Dorsolateral prefrontal cortex (tissue), 120 donors: ENCODE measurements at regions of chr10 and their contacts with region 1.

Region 1: DNA sequence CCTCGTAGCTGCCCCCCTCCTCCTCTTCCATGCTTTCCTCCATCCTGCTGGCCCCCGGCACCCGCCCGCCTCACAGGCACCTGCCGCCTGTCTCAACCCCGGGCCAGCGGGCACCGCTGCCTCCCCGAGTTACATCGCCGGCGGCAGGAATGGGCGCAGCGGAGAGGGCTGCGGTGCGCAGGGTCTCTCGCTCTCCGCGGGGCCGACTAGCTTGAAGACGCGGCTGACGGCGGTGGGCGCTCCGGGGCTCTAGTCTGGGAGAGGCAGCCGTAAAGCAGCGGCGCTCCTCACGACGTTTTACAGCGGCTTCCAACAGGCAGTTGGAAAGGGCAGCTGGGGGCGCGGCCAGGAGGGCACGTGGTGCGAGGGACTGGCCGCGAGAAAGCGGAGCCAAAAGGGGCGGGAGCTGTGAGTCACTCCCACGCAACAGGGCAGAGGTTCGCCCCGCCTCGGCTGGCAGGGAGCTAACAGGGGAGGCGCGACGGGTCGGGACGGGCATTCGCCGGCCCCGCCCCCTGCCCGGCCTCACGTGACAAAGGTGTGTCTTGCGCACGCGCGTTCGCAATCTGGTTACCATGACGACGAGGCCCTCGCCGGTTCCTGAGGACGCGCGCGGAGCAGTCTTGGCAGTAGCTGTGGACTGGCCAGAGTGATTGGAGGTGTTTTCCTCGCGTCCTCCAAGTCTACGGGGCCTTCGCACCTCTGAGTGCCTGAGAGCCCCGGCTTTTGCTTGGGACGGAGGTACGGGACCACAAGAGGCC is at the start of gene CACUL1:
- DNase-seq: peak; percentile 99 to 100 (median 100)
- H3K4me3 ChIP-seq: peak within 1 kb of the TSS; percentile 68 to 100 (median 96)
- H3K27ac ChIP-seq: peak within 1 kb of the TSS in 57 of 59 donors; percentile 10 to 96 (median 84)
- H3K27me3 ChIP-seq: no peaks in the 10 kb centered on the region
- CTCF ChIP-seq: peak in 37 of 56 donors; percentile 6 to 61 (median 30)
- total RNA-seq, gene CACUL1: 35.3 to 76.5 (median 52.9) TPM

Region 2: GRCh38 chr10:118439824-118440223 is 315.1 kb before region 1 on chr10:
- intact Hi-C with region 1: no loop called
- DNase-seq: no peak
- H3K4me3 ChIP-seq: no peak overlapping the region
- H3K27ac ChIP-seq: no peak overlapping the region
- H3K27me3 ChIP-seq: peaks cover 0 to 35% (median 6%) of the 10 kb centered on the region in 45 donors
- CTCF ChIP-seq: no peak

Region 3: DNA sequence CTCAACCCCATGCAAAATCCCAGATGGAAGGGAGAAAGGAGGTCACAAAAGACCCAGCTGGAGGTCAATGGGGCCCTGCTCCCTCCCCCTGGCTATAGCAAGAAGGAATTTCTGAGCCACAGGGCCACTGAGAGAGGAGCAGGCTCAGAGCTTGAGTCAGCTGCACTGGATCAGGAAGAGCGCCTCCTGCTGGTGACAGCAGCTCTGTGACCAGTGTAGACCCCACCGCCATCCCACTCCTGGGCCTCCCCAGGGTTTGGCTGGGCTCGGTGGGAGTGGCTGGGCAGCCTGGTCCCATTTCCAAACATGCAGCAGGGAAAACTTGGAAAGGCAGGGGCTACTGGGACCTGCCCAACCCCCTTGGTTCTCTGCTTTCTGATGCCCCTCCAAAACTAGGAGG is 127.9 kb before region 1 on chr10:
- intact Hi-C with region 1: no loop called
- DNase-seq: no peak
- H3K4me3 ChIP-seq: no peak overlapping the region
- H3K27ac ChIP-seq: no peak overlapping the region
- H3K27me3 ChIP-seq: peaks cover 0 to 6% (median 0%) of the 10 kb centered on the region in 45 donors
- CTCF ChIP-seq: peak in 2 of 56 donors; percentile 7 to 12

Region 4: DNA sequence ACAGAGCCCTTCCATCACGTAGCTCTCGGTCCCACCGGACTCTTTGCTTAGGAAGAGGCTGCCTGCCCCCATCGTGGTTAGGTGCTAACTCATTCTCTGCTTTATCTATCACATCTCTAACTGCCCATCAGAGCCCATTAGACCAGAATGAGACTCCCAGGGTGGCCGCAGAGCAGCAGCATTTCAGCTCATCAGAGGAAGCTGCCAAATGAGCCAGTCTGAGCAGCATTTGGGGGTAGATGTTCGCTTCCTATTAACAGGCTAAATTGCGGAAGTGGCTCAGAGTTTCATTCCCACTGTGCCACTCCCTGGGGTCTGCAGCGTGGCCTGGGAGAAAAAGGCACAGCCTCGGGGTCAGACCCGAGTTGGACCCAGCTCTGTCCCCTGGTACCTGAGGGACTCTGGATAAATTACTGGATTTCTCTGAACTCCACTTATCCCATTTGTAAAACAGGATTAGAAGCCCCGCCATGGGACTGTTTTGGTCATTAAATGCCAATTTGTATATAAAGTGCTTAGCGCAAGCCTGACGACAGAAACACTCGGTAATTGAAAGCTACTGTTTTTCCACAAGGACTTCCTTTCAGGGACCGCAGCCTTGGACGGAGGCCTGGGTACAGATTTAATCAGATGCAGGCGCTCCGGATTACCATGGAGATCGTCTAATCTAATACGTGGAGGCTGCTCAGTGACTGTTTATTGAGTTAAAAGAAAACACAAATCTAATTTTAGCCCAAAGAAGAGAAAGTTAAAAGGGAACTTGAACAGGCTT is 85.7 kb before region 1 on chr10:
- intact Hi-C with region 1: loop called in 1 of 2 experiments (anchors 10 kb)
- DNase-seq: peak in 6 of 10 donors; percentile 61 to 81 (median 68)
- H3K4me3 ChIP-seq: peak overlapping the region in 51 of 59 donors; percentile 3 to 61 (median 29)
- H3K27ac ChIP-seq: peak overlapping the region in 33 of 59 donors; percentile 2 to 84 (median 62)
- H3K27me3 ChIP-seq: peaks cover 0 to 11% (median 0%) of the 10 kb centered on the region in 45 donors
- CTCF ChIP-seq: peak in 1 of 56 donors; percentile 9

Region 5: DNA sequence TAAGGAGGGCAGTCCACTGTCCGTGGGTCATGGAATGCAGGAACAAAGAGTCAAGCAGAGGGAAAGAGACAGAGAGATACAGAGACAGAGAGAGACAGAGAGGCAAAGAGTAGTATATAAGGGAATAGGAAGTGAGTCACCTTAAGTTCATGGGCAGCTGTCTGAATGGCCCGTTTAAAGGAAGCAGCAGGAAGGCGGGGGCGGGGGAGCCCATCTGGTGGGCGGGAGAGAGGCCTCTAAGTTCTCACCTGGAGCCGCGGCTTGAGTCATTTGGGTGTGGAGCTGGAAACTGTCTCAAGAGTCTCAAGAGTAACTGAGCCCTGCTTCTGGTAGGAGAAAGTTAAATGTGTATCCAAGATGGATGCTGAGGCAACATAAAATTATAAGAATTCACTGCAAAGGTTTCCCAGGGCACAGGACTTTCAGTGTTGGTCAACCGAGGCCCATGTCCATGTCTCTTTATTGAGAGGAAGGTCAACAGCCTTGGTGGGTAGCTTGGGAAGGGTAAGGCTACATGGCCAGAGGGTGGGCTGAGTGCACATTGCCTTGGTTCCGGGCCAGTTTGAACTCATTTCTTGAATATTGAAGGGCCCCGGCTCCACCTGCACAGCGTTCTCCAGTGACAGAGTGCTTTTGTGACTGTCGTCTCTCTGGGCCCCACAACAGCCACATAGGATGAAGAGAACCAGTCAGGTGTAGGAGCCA is 85.3 kb after region 1 on chr10:
- intact Hi-C with region 1: no loop called
- DNase-seq: no peak
- H3K4me3 ChIP-seq: no peak overlapping the region
- H3K27ac ChIP-seq: no peak overlapping the region
- H3K27me3 ChIP-seq: no peaks in the 10 kb centered on the region
- CTCF ChIP-seq: no peak

Region 6: DNA sequence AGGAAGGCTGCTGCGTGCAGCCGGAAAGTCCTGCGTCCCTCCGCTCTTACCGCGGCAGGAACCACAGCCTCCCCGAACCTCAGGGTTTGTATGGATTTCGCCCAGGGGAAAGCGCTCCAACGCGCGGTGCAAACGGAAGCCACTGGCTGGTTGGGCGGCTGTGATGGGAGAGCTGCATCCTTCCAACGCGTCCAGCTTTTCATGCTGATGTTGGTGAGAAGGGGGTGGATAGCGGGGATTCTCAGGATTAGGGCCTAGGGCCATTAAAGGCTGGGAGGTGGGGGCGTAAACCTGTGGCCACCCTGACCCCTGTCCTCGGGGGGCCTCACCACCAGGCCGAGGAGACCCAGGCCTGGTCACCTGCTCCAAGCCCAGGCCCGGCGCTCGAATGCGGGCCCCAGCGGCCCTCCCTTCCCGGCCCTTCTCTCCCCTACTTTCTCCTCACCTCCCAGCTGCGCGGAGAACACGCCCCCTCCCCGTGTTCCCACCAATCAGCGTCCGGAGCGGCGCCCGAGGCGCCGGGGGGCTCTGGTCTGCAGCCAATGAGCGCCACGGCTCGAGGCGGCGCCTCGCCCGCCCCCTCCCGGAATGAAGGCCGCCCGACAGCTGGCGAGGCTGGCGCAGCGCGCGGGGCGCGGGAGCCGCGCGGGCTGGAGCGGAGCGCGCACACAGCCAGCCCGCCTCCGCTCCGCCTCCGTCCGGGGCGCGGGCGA is 274.2 kb after region 1 on chr10:
- intact Hi-C with region 1: loop called (anchors 2 to 5 kb)
- DNase-seq: peak; percentile 66 to 95 (median 88)
- H3K4me3 ChIP-seq: peak overlapping the region; percentile 28 to 75 (median 60)
- H3K27ac ChIP-seq: peak overlapping the region in 52 of 59 donors; percentile 1 to 85 (median 70)
- H3K27me3 ChIP-seq: no peaks in the 10 kb centered on the region
- CTCF ChIP-seq: peak in 31 of 56 donors; percentile 8 to 56 (median 33)

Region 7: GRCh38 chr10:119080521-119081260 is 325.8 kb after region 1 on chr10 and contains the start of gene EIF3A:
- intact Hi-C with region 1: loop called in 1 of 2 experiments (anchors 10 kb)
- DNase-seq: peak; percentile 82 to 97 (median 89)
- H3K4me3 ChIP-seq: peak within 1 kb of the TSS; percentile 66 to 100 (median 96)
- H3K27ac ChIP-seq: peak within 1 kb of the TSS; percentile 58 to 99 (median 93)
- H3K27me3 ChIP-seq: no peaks in the 10 kb centered on the region
- CTCF ChIP-seq: peak in 30 of 56 donors; percentile 4 to 58 (median 32)
- total RNA-seq, gene EIF3A: 63.1 to 89.9 (median 72.7) TPM

Region 8: GRCh38 chr10:119113751-119114732 is 359.1 kb after region 1 on chr10:
- intact Hi-C with region 1: no loop called
- DNase-seq: no peak
- H3K4me3 ChIP-seq: no peak overlapping the region
- H3K27ac ChIP-seq: no peak overlapping the region
- H3K27me3 ChIP-seq: no peaks in the 10 kb centered on the region
- CTCF ChIP-seq: no peak

Region 9: GRCh38 chr10:119596537-119597404 is 841.9 kb after region 1 on chr10 and contains the start of gene TIAL1:
- intact Hi-C with region 1: loop called in 1 of 2 experiments (anchors 5 kb)
- DNase-seq: peak; percentile 97 to 99 (median 99)
- H3K4me3 ChIP-seq: peak within 1 kb of the TSS; percentile 64 to 100 (median 91)
- H3K27ac ChIP-seq: peak within 1 kb of the TSS; percentile 93 to 100 (median 99)
- H3K27me3 ChIP-seq: no peaks in the 10 kb centered on the region
- CTCF ChIP-seq: peak in 34 of 56 donors; percentile 8 to 52 (median 26)
- total RNA-seq, gene TIAL1: 76.2 to 149 (median 107) TPM